ENCODE measurements at regions of chr22 and their contacts with region 1.

Region 1: GRCh38 chr22:23281406-23282088 is 101.2 kb downstream of the BCR start:
- DNase-seq: peak; percentile 81
- H3K4me3 Mint-ChIP-seq: no peak overlapping the region
- H3K27ac Mint-ChIP-seq: peak overlapping the region; percentile 36
- H3K4me1 Mint-ChIP-seq: peaks cover 11% of the 10 kb centered on the region
- H3K27me3 Mint-ChIP-seq: no peaks in the 10 kb centered on the region

Region 2: DNA sequence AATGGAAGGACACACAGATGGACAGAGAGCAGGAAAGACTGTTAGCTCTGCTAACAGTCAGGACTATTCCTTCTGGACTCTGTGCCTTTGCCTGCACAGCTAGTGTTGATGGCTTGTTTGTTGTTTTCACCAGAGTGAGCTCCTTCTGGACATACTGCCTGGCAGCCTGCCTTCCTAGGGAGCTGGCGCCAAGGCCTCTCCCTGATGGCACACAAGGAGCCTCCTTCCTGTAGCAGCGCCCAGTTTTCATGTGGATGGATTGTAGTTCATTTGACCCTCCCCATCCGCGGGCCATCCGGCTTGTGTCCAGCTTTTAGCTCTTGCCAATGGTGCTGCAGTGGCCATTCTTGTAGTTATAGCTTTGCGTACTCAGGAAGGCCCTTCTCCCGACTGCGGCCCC is 117.9 kb before region 1 on chr22:
- CTCF ChIA-PET with region 1: interaction called, 10 read pairs
- POLR2A ChIA-PET with region 1: no interaction called
- DNase-seq: no peak
- H3K4me3 Mint-ChIP-seq: no peak overlapping the region
- H3K27ac Mint-ChIP-seq: no peak overlapping the region
- H3K4me1 Mint-ChIP-seq: no peaks in the 10 kb centered on the region
- H3K27me3 Mint-ChIP-seq: no peaks in the 10 kb centered on the region

Region 3: DNA sequence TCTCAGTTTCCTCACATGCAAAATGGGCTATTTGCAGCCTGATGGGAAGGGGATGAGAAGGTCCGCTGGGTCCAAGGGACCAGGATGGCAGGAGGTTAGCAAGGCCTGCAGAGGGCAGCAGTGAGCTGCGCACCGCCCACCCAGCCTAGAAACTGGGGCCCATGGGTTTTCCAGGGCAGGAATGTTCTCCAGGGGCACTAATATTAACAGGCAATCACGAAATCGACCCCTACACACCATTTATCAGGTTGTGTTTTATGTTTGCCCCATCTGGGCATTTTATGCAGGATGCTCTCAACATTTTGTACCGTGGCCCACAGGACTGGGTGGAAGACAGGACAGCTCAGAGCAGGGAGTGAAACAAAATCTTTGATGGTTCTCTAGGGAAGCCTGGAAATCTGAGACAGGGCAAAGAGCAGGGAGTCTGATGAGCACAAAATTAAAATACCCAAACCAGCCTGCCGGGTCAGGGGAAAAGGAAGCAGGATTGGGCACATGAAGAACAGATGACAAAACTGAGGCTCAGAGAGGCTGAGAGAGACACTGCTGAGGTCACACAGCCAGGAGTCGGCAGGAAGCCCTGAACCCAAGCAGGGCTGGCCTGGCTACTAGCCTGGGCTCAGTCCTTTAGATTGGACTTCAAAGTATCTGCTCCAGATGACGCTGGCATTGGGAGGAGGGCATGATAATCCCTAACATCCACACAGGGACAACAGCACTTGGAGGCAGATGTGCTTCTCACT is 102.9 kb before region 1 on chr22:
- CTCF ChIA-PET with region 1: interaction called, 67 read pairs
- POLR2A ChIA-PET with region 1: interaction called, 4 read pairs
- DNase-seq: peak; percentile 59
- H3K4me3 Mint-ChIP-seq: peak overlapping the region; percentile 69
- H3K27ac Mint-ChIP-seq: peak overlapping the region; percentile 74
- H3K4me1 Mint-ChIP-seq: peaks cover 54% of the 10 kb centered on the region
- H3K27me3 Mint-ChIP-seq: no peaks in the 10 kb centered on the region

Region 4: GRCh38 chr22:23270212-23270733 is 11.3 kb before region 1 on chr22:
- CTCF ChIA-PET with region 1: interaction called, 12 read pairs
- POLR2A ChIA-PET with region 1: no interaction called
- DNase-seq: no peak
- H3K4me3 Mint-ChIP-seq: no peak overlapping the region
- H3K27ac Mint-ChIP-seq: no peak overlapping the region
- H3K4me1 Mint-ChIP-seq: peaks cover 10% of the 10 kb centered on the region
- H3K27me3 Mint-ChIP-seq: no peaks in the 10 kb centered on the region

Measured in activated CD4-positive, alpha-beta T cell treated with anti-CD3 and anti-CD28 coated beads, Interleukin-2, amount 10 ng/mL, durations not matched to agents 7 days and 5 days (primary cell).